ENCODE measurements at regions of chr19 and their contacts with region 1.

Region 1: DNA sequence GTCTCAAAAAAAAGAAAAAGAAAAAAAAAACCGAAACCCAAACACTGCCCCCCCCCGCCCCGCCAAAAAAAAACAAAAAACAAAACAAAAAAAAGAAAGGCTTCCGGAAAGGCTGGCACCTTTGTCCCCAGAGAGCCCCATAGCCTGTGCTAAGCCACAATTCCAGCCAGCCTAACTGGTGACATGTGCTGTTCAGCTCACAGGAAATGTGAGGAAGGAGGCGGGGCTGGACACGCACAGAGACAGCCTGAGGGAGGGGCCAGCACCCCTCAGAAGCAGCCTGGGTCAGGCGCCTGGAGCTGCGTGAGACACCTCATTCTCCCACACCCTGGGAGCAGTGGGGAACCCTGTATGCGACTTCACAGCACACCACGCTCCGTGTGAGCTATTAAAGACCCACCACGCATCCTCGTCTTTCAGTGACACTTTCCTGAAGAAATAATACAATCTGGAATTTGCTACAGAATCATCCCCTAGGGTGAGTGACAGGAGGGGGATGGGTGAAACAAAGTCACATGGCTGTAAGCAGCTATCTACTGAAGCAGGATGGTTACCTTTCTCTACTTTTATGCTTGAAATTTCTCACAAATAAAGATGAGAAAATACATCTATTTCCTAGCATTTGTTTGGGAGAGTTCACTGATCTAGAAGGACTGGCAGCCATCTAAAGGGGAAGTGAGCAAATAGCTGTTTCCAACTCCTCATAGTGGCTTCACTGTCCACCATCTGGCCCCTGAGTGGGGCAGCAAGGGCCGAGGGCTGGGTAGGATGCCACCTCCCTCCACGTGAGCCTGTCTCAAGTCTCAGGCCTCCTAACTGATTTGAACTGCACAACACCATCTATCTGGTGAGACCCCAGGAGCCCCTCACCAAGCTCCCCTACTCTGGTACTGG is 12.3 kb upstream of the SLC35E1 start:
- DNase-seq: peak; percentile 94
- H3K4me3 ChIP-seq: peak overlapping the region; percentile 73
- H3K27ac ChIP-seq: peak overlapping the region; percentile 97
- H3K4me1 ChIP-seq: peaks cover 82% of the 10 kb centered on the region
- CTCF ChIP-seq: no peak

Region 2: GRCh38 chr19:16076154-16076957 is 508.1 kb before region 1 on chr19 and contains the start of gene TPM4:
- CTCF ChIA-PET with region 1: no interaction called
- POLR2A ChIA-PET with region 1: no interaction called
- intact Hi-C with region 1: loop called (anchors 5 kb)
- DNase-seq: peak; percentile 67
- H3K4me3 ChIP-seq: peak within 1 kb of the TSS; percentile 80
- H3K27ac ChIP-seq: peak within 1 kb of the TSS; percentile 96
- H3K4me1 ChIP-seq: peaks cover 56% of the 10 kb centered on the region
- CTCF ChIP-seq: no peak
- total RNA-seq, gene TPM4: 111 and 134 TPM in 2 replicates

Region 3: GRCh38 chr19:16542045-16542909 is 42.2 kb before region 1 on chr19 and contains the start of gene CHERP:
- CTCF ChIA-PET with region 1: no interaction called
- POLR2A ChIA-PET with region 1: interaction called, 5 read pairs
- intact Hi-C with region 1: loop called (anchors 5 kb)
- DNase-seq: peak; percentile 98
- H3K4me3 ChIP-seq: peak within 1 kb of the TSS; percentile 96
- H3K27ac ChIP-seq: peak within 1 kb of the TSS; percentile 71
- H3K4me1 ChIP-seq: peaks cover 33% of the 10 kb centered on the region
- CTCF ChIP-seq: 0 out of 2 replicates have a peak, but pooled peaks have one; percentile 21
- total RNA-seq, gene CHERP: 14.6 and 15.6 TPM in 2 replicates

Region 4: DNA sequence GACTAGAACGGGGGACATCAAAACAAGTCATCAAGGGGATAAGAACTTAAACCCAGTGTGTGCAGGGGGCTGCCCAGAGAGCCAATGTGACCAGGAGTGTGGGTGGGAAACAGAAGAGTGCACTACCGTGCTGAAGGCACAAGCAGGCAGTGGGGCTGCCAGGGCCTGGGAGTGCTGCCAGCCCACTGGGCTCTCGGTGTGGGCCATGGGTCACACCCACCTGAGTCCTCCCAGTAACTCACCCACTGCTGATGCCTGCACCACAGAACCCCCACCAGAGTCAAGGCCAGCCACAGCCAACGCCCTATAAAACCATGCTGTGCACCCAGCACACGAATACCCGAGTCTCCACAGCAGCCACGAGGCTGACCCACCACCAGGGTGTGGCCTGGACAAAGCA is 35.0 kb after region 1 on chr19:
- CTCF ChIA-PET with region 1: interaction called, 6 read pairs
- POLR2A ChIA-PET with region 1: interaction called, 18 read pairs
- intact Hi-C with region 1: loop called (anchors 2 kb)
- DNase-seq: no peak
- H3K4me3 ChIP-seq: no peak overlapping the region
- H3K27ac ChIP-seq: peak overlapping the region; percentile 54
- H3K4me1 ChIP-seq: peaks cover 75% of the 10 kb centered on the region
- CTCF ChIP-seq: no peak

Region 5: DNA sequence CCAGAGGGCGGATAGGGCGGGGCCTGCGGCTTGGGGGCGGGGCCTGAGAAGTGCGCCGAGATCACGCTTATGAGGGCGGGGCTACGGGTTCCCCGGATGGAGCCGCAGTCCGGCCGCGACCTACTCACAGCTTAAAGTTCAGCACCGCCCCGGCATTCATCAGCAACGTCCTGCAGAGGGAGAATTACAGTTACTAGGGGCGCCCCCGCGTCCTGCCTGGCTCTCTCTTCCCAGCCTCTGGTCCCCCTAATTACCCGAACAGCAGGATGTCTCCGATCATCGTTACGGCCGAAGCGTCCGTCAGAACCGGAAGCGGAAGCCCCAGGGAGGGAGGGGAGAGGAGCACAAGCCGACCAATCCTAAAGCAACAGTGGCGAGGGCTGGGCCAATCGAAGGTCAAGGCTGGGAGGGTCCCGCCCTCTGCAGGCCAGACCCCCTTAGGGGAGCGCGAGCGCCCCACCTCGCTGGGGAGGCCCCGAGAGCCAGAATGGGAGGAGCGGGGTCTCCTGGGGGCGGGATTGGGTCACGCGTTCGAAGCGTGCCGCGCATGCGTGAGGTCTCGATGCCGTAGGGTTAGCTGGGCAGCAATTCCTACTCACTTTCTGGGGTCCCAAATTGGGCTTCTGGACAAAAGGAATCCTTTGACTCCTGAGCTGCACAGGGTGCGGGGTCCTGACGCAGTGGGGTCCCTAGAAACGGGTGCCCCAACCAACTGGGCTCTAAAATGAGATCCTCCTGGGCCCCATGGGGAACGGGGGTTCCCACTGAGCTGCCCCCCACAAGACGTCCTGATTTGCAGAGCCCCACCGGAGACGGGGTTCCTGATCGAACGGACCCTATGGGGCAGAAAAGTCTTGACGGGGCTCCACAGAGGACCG is 75.6 kb after region 1 on chr19 and contains the start of gene SMIM7:
- CTCF ChIA-PET with region 1: no interaction called
- POLR2A ChIA-PET with region 1: interaction called, 6 read pairs
- intact Hi-C with region 1: loop called (anchors 2 kb)
- DNase-seq: peak; percentile 100
- H3K4me3 ChIP-seq: peak within 1 kb of the TSS; percentile 96
- H3K27ac ChIP-seq: peak within 1 kb of the TSS; percentile 83
- H3K4me1 ChIP-seq: peaks cover 29% of the 10 kb centered on the region
- CTCF ChIP-seq: peak; percentile 66
- total RNA-seq, gene SMIM7: 75.5 and 87.0 TPM in 2 replicates

Measured in OCI-LY7 (cell line).